Psoas muscle (tissue), 8 donors: ENCODE measurements at regions of chr2 and their contacts with region 1.

Region 1: GRCh38 chr2:206955253-206955652 is 15.9 kb downstream of the CPO start:
- DNase-seq: no peak
- ATAC-seq: no peak
- H3K4me3 ChIP-seq: no peak overlapping the region
- H3K27ac ChIP-seq: no peak overlapping the region
- H3K4me1 ChIP-seq: no peaks in the 10 kb centered on the region
- H3K27me3 ChIP-seq: no peaks in the 10 kb centered on the region
- CTCF ChIP-seq: no peak

Region 2: GRCh38 chr2:206635031-206635430 is 320.2 kb before region 1 on chr2:
- intact Hi-C with region 1: no loop called
- DNase-seq: no peak
- ATAC-seq: no peak
- H3K4me3 ChIP-seq: no peak overlapping the region
- H3K27ac ChIP-seq: no peak overlapping the region
- H3K4me1 ChIP-seq: no peaks in the 10 kb centered on the region
- H3K27me3 ChIP-seq: peaks cover 0 to 5% (median 0%) of the 10 kb centered on the region in 3 donors
- CTCF ChIP-seq: no peak

Region 3: GRCh38 chr2:206823178-206823577 is 132.1 kb before region 1 on chr2:
- intact Hi-C with region 1: loop called in 1 of 2 experiments (anchors 10 kb)
- DNase-seq: no peak
- ATAC-seq: peak in 1 of 4 donors; percentile 44
- H3K4me3 ChIP-seq: no peak overlapping the region
- H3K27ac ChIP-seq: no peak overlapping the region
- H3K4me1 ChIP-seq: no peaks in the 10 kb centered on the region
- H3K27me3 ChIP-seq: no peaks in the 10 kb centered on the region
- CTCF ChIP-seq: no peak